Dendritic cell treated with granulocyte-macrophage colony-stimulating factor and Interleukin-4, amounts not matched to agents 40 ng/mL and 50 ng/mL, for 4 days (primary cell): ENCODE measurements at regions of chr3 and their contacts with region 1.

Region 1: DNA sequence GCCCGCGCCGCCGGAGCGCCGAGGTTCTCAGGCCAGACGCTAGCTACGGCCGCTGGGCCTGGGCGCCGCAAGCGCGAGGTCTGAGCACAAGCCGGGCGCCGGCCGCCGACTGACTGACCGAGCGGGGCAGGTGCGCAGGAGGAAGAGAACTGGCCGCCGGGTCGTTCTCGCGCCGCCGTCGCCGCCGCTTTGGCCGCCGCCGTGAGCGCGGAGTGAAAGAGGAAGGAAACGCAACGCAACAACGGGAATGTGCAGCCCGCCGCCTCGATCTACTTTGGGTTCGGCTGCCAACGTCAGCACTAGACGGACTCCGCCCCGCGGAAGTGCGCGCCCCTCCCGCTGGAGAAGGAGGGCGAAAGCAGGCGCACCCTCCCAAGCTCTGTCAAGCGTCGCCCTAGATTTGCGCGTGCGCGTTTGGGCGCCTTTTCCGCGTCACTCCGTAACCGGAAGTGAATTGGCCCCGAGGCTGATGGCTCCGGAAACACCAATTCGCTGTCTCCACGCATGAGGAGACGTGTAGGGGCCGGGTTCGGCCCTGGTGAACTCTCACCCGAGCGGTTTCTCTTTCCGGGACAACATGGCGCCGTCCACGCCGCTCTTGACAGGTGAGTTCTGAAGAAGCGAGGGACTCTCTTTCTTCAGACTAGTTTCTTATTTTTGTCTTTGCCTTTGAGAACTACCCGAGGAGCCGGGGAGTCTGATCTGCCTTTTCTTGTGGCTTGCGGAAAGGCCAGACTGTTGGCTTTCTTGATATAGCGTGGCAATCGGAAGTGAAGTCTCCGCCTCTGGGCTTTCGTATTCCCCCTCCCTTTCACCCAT is at the starts of genes EIF2A and SERP1:
- H3K4me3 Mint-ChIP-seq: peak within 1 kb of the TSS; percentile 98
- H3K27ac Mint-ChIP-seq: peak within 1 kb of the TSS; percentile 99
- H3K4me1 Mint-ChIP-seq: peaks cover 38% of the 10 kb centered on the region
- H3K27me3 Mint-ChIP-seq: no peaks in the 10 kb centered on the region

Region 2: GRCh38 chr3:150443331-150443741 is 103.1 kb before region 1 on chr3:
- intact Hi-C with region 1: no loop called
- H3K4me3 Mint-ChIP-seq: no peak overlapping the region
- H3K27ac Mint-ChIP-seq: no peak overlapping the region
- H3K4me1 Mint-ChIP-seq: peaks cover 17% of the 10 kb centered on the region
- H3K27me3 Mint-ChIP-seq: no peaks in the 10 kb centered on the region

Region 3: GRCh38 chr3:150582620-150583019 is 36.2 kb after region 1 on chr3:
- intact Hi-C with region 1: no loop called
- H3K4me3 Mint-ChIP-seq: no peak overlapping the region
- H3K27ac Mint-ChIP-seq: no peak overlapping the region
- H3K4me1 Mint-ChIP-seq: no peaks in the 10 kb centered on the region
- H3K27me3 Mint-ChIP-seq: no peaks in the 10 kb centered on the region

Region 4: DNA sequence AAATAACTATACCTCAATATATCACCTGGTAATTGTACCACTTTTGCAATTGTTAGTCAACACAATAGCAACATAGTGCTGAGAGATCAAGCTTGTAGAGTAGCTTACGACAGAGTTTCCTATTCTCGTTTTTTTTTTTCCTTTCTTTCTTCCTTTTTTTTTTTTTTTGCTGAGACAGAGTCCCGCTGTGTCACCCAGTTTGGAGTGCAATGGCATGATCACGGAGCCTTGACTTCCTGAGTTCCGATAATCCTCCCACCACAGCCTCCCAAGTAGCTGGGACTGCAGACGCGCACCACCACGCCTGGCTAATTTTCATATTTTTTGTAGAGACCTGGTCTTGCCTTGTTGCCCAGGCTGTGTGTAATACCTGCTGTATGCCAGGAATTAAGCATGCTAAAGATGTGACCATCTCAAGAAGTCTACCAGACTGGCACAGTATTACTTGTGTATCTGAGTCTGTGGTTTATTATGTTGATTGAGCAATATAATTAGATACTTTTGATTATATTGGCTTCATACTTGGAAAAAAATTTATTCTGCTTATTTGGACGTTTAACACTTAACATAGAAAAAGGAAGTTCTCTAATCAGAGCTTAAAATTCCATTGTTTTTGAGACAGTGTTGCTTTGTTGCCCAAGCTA is 59.7 kb after region 1 on chr3:
- intact Hi-C with region 1: loop called (anchors 1 kb)
- H3K4me3 Mint-ChIP-seq: peak overlapping the region; percentile 68
- H3K27ac Mint-ChIP-seq: peak overlapping the region; percentile 80
- H3K4me1 Mint-ChIP-seq: peaks cover 69% of the 10 kb centered on the region
- H3K27me3 Mint-ChIP-seq: no peaks in the 10 kb centered on the region

Region 5: DNA sequence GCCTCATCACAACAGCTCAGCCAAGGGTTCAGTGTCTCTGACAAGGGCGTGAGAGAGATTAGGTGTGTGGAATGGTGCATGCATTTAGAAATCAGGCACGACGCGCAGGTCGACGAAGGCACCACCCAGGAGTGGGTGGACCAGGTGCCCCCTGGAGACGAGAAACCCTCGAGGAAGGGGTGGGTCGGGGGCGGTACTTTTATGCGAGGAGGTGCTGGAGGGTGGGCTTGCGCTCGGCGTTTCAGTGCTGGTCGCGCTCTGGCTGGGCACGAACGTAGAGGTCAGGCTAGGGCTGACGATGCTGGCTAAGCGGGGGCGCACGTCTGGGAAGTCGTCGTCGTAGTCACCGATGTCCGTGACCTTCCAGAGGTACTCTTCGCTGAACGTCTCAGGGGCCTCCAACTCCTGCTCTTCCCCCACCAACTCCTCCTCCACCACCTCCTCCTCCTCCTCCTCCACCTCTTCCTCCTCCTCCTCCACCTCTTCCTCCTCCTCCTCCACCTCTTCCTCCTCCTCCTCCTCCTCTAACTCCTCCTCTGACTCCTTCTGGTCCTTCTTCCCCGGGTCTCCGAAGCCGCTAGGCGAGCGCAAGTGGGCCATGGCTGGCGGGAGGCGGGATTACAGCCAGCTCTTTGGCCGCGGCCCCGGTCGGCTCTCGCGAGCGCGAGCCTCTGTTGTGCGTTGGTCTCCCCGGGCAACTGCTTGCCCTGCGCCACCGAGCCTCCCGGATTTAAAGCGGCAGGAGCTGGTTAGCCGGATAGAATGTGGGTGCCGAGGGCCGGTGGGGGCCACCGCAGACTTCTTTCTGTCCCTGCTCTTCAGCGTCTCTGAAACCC is 157.1 kb after region 1 on chr3 and contains the start of gene ERICH6:
- intact Hi-C with region 1: loop called (anchors 5 kb)
- H3K4me3 Mint-ChIP-seq: peak within 1 kb of the TSS; percentile 91
- H3K27ac Mint-ChIP-seq: peak within 1 kb of the TSS; percentile 96
- H3K4me1 Mint-ChIP-seq: peaks cover 23% of the 10 kb centered on the region
- H3K27me3 Mint-ChIP-seq: no peaks in the 10 kb centered on the region

Region 6: DNA sequence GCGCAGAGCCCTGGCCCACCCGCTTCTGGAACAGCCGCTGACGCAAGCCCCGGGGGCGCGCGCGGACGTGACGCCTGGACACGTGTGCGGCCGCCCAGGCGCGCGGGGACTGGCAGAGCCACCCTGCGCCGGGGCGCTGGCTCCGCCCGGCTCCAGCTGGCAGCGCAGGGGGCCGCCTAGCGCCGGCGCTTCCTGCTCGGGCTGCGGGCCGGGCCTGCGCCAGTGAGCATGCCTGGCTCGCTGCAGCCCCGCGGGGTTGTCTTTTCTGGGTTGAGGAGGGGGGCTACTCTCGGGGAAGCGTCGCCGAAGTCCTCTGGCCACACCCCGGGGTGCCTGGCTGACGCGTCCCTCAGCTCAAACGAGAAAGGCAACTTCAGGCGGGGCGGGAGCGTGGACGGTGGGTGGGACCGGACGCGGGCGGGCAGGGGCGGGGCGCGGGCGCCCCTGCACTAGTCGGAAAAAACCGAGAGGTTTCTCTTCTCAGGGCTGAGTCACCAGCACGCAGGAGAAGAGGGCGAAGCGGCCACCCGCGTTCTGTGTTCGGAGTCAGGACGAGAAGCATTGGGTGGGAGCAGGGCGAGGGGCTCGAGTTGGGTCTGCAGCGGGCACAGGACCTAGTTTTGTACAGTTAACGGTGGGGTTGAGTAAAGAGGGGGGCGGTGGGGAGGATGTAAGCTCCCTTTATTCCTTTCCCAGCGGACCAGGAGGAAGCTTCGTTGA is 216.8 kb after region 1 on chr3 and contains the start of gene SIAH2:
- intact Hi-C with region 1: loop called (anchors 2 kb)
- H3K4me3 Mint-ChIP-seq: peak within 1 kb of the TSS; percentile 94
- H3K27ac Mint-ChIP-seq: peak within 1 kb of the TSS; percentile 98
- H3K4me1 Mint-ChIP-seq: peaks cover 35% of the 10 kb centered on the region
- H3K27me3 Mint-ChIP-seq: no peaks in the 10 kb centered on the region

Region 7: DNA sequence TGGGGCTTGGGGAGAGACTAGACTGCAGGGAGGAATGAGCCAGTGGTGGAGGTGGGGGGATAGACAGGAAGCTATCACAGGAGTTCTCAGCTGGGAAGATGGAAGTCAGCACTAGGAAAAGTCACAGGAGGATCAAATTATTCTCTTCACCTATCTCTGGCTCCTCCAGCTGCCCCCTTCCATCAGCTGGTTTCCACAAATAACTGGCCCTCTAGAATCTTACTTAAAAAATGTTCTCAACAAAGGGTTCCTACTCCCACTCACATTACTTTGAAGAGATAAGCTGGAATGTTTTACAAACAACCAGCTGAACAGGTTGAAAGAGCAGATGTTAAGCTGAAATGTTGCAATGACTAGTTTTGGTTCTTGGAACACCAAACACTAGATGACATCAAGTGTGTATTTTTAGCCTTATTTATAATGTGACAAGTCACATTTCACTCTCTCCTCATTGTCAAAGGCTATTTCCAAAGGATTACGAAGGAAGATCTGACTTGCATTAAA is 1084.6 kb after region 1 on chr3:
- intact Hi-C with region 1: no loop called
- H3K4me3 Mint-ChIP-seq: no peak overlapping the region
- H3K27ac Mint-ChIP-seq: no peak overlapping the region
- H3K4me1 Mint-ChIP-seq: peaks cover 6% of the 10 kb centered on the region
- H3K27me3 Mint-ChIP-seq: no peaks in the 10 kb centered on the region